CD4-positive, alpha-beta T cell (primary cell): ENCODE measurements at regions of chr1 and their contacts with region 1.

Region 1: DNA sequence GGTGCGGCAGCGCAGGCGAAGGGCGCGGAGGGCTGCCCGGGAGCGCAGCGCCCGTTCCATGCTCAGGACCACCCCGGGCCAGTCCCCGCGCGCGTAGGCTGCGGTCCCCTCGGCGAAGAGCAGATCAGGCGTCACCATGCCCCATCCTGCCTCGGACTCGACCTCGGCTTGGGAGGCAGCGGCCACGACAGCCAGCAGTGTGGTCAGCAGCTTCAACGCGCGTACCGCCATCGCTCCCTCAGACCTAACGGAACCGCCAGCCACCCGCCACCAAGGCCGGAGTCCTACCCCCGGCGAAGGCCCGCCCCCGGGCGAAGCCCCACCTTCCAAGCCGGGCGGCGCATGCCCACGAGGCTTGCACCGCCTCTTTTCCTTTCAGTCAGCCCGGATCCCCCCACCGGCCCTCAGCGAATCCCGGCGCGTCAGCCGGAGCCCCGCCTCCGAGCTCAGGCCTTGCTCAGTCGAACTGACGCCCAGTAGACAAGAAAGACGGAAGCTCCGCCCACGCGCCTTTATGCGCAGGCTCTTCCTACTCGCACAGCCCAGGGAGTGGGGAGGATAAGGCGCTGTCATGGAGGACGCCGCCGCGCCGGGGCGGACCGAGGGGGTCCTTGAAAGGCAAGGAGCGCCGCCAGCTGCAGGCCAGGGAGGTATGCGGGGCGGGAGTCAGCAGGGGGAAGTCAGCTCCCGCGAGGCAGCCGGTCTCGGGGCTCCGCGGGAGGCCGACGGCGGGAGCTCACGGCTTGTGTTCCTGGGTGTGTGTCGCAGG is at the starts of genes C1orf50 and P3H1:
- DNase-seq: peak; percentile 98 to 100 (median 99)
- ATAC-seq: peak; percentile 92
- H3K4me3 ChIP-seq: peak within 1 kb of the TSS; percentile 86
- H3K4me3 Mint-ChIP-seq: no peak within 1 kb of the TSS
- H3K27ac ChIP-seq: peak within 1 kb of the TSS; percentile 49 to 78
- H3K27ac Mint-ChIP-seq: no peak within 1 kb of the TSS
- H3K4me1 ChIP-seq: peaks cover 47% of the 10 kb centered on the region
- H3K4me1 Mint-ChIP-seq: peaks cover 35% of the 10 kb centered on the region
- H3K27me3 ChIP-seq: no peaks in the 10 kb centered on the region
- H3K27me3 Mint-ChIP-seq: no peaks in the 10 kb centered on the region
- CTCF ChIP-seq: no peak
- total RNA-seq, gene C1orf50: 23.1 to 23.9 TPM
- total RNA-seq, gene P3H1: 17.6 to 20.9 TPM

Region 2: DNA sequence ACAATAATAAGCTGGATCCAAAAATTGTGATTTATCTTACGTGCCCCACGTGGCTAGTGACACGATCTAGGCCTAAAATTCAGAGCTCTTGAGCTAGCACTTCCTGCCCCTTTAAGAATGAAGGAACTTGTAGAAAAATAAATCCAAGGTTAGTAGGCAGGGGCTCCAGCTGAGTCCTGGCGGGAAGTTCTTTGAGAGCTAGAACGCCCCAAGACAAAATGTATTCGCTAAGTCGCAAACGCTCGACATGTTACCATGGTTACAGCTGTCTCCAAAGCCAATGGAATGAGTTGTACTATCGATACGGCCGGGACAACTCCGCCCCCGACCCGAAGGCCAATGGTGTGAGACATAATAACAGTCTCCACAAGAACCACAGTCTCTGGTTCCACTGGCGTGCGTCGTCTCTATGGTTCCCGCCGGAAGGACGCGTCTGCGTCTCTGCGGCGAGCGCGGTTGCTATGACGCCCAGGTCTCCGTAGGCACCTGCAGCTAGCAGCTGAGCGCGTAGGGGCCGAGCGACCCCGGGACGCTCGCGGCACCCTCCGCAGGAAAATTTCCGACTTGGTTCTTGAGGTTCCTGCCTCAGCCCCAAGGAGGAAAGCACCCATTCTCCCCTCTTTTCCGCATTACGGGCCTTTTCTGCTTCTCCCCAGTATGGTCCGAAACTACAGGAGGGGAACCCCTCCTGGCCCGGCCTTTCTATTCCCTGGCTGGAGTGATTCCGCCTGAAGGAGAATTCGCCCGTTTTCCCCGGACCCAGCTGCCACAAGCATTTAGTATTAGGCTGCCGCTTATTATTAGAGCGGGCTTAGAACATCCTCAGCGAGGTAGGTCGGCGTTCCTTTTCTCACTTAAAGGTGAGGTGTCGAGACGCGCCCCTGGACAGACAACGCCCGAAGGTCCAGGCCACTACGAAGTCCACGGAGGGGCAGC is 303.8 kb before region 1 on chr1 and contains the start of gene CCDC30:
- CTCF ChIA-PET with region 1: no interaction called
- POLR2A ChIA-PET with region 1: interaction called, 10 read pairs
- intact Hi-C with region 1: loop called in 1 of 2 experiments (anchors 5 kb)
- DNase-seq: peak; percentile 91 to 99 (median 95)
- ATAC-seq: peak; percentile 97
- H3K4me3 ChIP-seq: peak within 1 kb of the TSS; percentile 69
- H3K4me3 Mint-ChIP-seq: peak within 1 kb of the TSS; percentile 87
- H3K27ac ChIP-seq: peak within 1 kb of the TSS; percentile 49 to 86
- H3K27ac Mint-ChIP-seq: peak within 1 kb of the TSS; percentile 86
- H3K4me1 ChIP-seq: peaks cover 15% of the 10 kb centered on the region
- H3K4me1 Mint-ChIP-seq: peaks cover 52% of the 10 kb centered on the region
- H3K27me3 ChIP-seq: no peaks in the 10 kb centered on the region
- H3K27me3 Mint-ChIP-seq: peaks cover 4% of the 10 kb centered on the region
- CTCF ChIP-seq: no peak
- total RNA-seq, gene CCDC30: 1.2 to 1.3 TPM

Region 3: GRCh38 chr1:42541104-42541503 is 225.8 kb before region 1 on chr1:
- CTCF ChIA-PET with region 1: no interaction called
- POLR2A ChIA-PET with region 1: no interaction called
- intact Hi-C with region 1: no loop called
- DNase-seq: no peak
- ATAC-seq: no peak
- H3K4me3 ChIP-seq: no peak overlapping the region
- H3K4me3 Mint-ChIP-seq: no peak overlapping the region
- H3K27ac ChIP-seq: no peak overlapping the region
- H3K27ac Mint-ChIP-seq: no peak overlapping the region
- H3K4me1 ChIP-seq: no peaks in the 10 kb centered on the region
- H3K4me1 Mint-ChIP-seq: no peaks in the 10 kb centered on the region
- H3K27me3 ChIP-seq: no peaks in the 10 kb centered on the region
- H3K27me3 Mint-ChIP-seq: no peaks in the 10 kb centered on the region
- CTCF ChIP-seq: no peak

Region 4: DNA sequence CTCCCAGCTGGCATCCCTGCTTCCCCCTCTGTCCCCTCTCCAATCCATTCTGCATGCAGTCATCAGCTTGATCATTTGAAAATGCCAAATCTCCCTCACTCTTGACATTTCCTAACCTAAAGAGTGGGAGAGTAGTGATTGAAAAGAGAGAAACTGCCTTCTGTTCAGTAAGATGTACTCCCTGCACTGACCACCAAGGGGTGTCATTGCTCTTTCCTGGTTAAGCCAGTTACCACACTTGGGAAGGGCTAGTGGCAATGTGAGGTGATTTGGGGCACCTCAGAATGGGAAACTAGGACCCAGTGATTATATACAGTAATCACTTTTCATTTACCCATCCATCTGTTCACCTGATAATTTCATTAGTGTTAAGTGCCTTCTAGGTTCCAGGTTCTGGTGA is 10.9 kb after region 1 on chr1:
- CTCF ChIA-PET with region 1: interaction called, 3 read pairs
- POLR2A ChIA-PET with region 1: interaction called, 12 read pairs
- intact Hi-C with region 1: no loop called
- DNase-seq: peak in 8 of 14 experiments; percentile 6 to 59 (median 25)
- ATAC-seq: peak; percentile 84
- H3K4me3 ChIP-seq: no peak overlapping the region
- H3K4me3 Mint-ChIP-seq: no peak overlapping the region
- H3K27ac ChIP-seq: no peak overlapping the region
- H3K27ac Mint-ChIP-seq: no peak overlapping the region
- H3K4me1 ChIP-seq: no peaks in the 10 kb centered on the region
- H3K4me1 Mint-ChIP-seq: peaks cover 6% of the 10 kb centered on the region
- H3K27me3 ChIP-seq: no peaks in the 10 kb centered on the region
- H3K27me3 Mint-ChIP-seq: no peaks in the 10 kb centered on the region
- CTCF ChIP-seq: peak; percentile 36

Region 5: DNA sequence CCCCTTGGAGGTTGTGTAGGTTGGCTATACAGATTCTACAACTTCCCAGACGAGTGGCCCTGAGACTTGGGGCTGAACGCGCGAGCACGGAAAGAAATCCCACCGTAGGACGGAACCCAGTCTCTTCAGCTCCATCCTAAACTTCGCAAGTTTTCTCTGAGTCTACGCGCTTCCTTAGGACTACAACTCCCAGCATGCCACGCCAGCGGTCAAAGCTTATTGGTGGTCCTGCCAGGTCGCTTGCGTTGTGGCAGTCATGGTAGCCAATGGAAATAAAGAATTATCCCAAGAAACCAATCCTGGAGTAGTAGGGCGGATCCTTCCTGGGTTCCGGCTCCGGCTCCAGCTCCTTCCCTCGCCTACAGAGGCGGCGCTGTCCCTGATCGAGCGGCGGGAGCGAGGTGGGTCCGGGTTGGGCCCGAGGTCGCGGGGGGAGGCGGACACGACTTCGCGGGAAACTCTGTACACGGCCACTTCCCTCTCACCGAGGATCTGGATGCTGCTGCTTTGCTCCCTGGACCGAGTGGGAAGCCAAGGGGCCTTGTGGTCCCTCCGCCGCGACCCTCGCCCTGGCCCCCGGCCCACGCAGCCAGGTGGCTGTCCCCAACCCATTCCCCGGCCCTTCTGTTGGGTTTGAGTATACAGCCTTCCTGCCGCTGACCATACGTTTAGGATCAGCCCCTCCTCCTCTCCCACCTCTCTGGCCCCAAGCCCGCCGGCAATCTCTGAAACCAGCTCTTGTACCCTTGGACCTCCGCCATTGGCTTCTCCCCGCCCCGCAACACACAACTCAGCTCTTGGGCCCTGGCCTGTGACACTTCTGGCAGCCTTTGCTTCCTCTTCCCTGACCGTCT is 79.6 kb after region 1 on chr1 and contains the start of gene ZNF691:
- CTCF ChIA-PET with region 1: interaction called, 10 read pairs
- POLR2A ChIA-PET with region 1: interaction called, 53 read pairs
- intact Hi-C with region 1: loop called (anchors 2 to 5 kb)
- DNase-seq: peak; percentile 73 to 96 (median 82)
- ATAC-seq: peak; percentile 98
- H3K4me3 ChIP-seq: peak within 1 kb of the TSS; percentile 96
- H3K4me3 Mint-ChIP-seq: peak within 1 kb of the TSS; percentile 94
- H3K27ac ChIP-seq: peak within 1 kb of the TSS in 1 of 2 donors; percentile 56
- H3K27ac Mint-ChIP-seq: peak within 1 kb of the TSS; percentile 67
- H3K4me1 ChIP-seq: peaks cover 19% of the 10 kb centered on the region
- H3K4me1 Mint-ChIP-seq: peaks cover 38% of the 10 kb centered on the region
- H3K27me3 ChIP-seq: no peaks in the 10 kb centered on the region
- H3K27me3 Mint-ChIP-seq: no peaks in the 10 kb centered on the region
- CTCF ChIP-seq: peak; percentile 47
- total RNA-seq, gene ZNF691: 1.2 to 1.7 TPM

Region 6: DNA sequence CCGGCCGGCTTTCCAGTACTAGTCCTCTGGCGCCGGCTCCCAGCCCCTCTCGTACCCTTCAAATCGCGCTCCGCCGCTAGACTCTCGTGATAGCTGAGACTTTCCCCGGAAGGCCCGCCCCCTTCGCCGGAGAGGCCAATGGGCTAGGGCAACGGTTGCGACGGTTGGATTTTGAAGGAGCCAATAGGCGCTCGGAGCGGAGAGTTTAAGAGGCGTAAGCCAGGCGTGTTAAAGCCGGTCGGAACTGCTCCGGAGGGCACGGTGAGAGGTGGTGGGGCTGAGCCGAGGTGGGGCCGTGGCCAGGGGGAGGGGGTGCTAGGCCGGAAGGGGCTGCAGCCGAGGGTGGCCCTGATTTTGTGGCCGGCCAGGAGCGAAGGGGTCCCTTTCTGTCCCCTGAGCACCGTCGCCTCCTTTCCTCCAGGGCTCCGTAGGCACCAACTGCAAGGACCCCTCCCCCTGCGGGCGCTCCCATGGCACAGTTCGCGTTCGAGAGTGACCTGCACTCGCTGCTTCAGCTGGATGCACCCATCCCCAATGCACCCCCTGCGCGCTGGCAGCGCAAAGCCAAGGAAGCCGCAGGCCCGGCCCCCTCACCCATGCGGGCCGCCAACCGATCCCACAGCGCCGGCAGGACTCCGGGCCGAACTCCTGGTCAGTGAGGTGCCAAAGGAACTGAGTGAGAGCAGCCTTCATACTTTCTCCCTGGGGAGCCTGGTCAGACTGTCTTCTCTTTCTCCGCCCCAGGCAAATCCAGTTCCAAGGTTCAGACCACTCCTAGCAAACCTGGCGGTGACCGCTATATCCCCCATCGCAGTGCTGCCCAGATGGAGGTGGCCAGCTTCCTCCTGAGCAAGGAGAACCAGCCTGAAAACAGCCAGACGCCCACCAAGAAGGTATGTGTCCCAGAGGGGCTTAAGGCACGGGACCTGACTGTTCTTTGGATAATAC is 592.1 kb after region 1 on chr1 and contains the start of gene CDC20:
- CTCF ChIA-PET with region 1: no interaction called
- POLR2A ChIA-PET with region 1: no interaction called
- intact Hi-C with region 1: loop called (anchors 2 to 10 kb)
- DNase-seq: peak; percentile 91 to 98 (median 96)
- ATAC-seq: peak; percentile 99
- H3K4me3 ChIP-seq: peak within 1 kb of the TSS; percentile 76
- H3K4me3 Mint-ChIP-seq: peak within 1 kb of the TSS; percentile 85
- H3K27ac ChIP-seq: peak within 1 kb of the TSS in 1 of 2 donors; percentile 37
- H3K27ac Mint-ChIP-seq: peak within 1 kb of the TSS; percentile 87
- H3K4me1 ChIP-seq: peaks cover 15% of the 10 kb centered on the region
- H3K4me1 Mint-ChIP-seq: peaks cover 19% of the 10 kb centered on the region
- H3K27me3 ChIP-seq: no peaks in the 10 kb centered on the region
- H3K27me3 Mint-ChIP-seq: no peaks in the 10 kb centered on the region
- CTCF ChIP-seq: no peak
- total RNA-seq, gene CDC20: 1.1 to 1.8 TPM